ENCODE measurements at regions of chr1 and their contacts with region 1.

Region 1: DNA sequence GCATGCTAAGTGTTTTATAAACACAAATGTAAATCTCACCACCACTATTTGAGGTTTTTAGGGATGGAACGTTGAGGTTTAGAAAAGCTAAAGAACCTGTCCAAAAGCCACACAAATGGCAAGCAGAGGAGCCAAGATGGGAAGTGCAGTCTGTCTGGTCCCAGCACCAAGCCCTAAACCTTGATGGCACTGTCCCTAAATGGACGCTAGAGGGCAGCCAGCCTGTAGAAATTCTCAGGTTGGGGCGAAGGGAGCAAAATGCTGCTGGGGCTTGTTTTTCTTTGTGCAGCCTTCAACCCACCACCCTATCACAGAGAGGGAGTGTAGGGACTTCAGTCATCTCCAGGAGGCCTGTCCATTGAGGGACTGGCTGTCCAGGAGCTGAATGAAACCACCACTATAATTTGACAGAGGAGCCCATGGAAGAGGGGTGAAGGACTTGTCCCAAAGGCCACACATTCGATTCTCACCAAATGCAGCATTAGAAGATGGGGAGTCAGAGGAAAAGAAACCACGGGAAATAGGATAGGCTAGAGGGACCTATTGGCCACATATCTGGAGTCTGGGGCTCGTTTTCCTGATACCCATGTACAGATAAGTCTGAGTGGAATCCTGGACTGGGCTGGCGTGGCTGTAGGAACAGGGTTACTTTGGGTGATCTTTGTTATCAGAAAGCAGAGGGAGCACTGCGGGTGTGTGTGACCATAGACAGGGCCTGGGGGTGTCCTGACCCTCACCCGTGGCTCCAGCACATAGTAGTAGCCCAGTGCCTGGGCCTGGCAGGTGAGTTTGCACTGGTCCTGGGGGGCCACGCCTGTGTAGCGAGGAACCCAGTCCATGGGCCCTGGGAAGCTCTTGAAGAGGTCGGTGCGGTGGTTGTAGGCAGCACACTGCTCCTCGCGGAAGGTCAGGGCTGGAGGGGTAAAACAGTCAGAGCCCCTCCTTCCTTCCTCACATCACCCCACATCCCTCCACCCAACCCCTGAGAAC is 6.1 kb downstream of the ADAMTS4 start:
- DNase-seq: peak; percentile 68
- H3K4me3 ChIP-seq: no peak overlapping the region
- H3K27ac ChIP-seq: no peak overlapping the region
- H3K4me1 ChIP-seq: peaks cover 21% of the 10 kb centered on the region
- H3K27me3 ChIP-seq: no peaks in the 10 kb centered on the region
- CTCF ChIP-seq: peak; percentile 93
- POLR2A ChIP-seq: no peak

Region 2: GRCh38 chr1:161209790-161210409 is 17.1 kb after region 1 on chr1:
- CTCF ChIA-PET with region 1: interaction called, 15 read pairs
- POLR2A ChIA-PET with region 1: interaction called, 3 read pairs
- dilution Hi-C with region 1: no loop called
- intact Hi-C with region 1: loop called (anchors 1 kb)
- DNase-seq: peak; percentile 62
- H3K4me3 ChIP-seq: no peak overlapping the region
- H3K27ac ChIP-seq: no peak overlapping the region
- H3K4me1 ChIP-seq: peaks cover 10% of the 10 kb centered on the region
- H3K27me3 ChIP-seq: no peaks in the 10 kb centered on the region
- CTCF ChIP-seq: peak; percentile 89 to 91
- POLR2A ChIP-seq: no peak

Region 3: DNA sequence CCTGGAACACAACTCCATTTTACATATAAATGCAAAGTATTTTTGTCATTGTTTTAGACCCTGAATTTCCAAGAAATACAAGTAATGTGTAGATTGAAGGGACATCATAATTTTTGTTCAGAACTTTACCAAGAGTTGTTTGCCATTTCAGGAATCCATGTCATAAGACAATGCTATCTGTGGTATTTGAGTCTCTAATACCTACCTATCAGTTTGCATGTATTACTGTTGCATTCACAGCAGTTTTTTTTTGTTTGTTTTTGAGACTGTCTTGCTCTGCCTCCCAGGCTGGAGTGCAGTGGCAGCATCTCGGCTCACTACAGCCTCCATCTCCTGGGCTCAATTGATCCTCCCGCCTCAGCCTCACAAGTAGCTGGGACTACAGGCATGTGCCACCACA is 99.9 kb after region 1 on chr1:
- CTCF ChIA-PET with region 1: interaction called, 9 read pairs
- POLR2A ChIA-PET with region 1: no interaction called
- dilution Hi-C with region 1: no loop called
- intact Hi-C with region 1: loop called (anchors 2 kb)
- DNase-seq: no peak
- H3K4me3 ChIP-seq: no peak overlapping the region
- H3K27ac ChIP-seq: no peak overlapping the region
- H3K4me1 ChIP-seq: no peaks in the 10 kb centered on the region
- H3K27me3 ChIP-seq: peaks cover 5 to 8% of the 10 kb centered on the region in 2 experiments
- CTCF ChIP-seq: no peak
- POLR2A ChIP-seq: no peak